ENCODE measurements at regions of chr10 and their contacts with region 1.

Region 1: DNA sequence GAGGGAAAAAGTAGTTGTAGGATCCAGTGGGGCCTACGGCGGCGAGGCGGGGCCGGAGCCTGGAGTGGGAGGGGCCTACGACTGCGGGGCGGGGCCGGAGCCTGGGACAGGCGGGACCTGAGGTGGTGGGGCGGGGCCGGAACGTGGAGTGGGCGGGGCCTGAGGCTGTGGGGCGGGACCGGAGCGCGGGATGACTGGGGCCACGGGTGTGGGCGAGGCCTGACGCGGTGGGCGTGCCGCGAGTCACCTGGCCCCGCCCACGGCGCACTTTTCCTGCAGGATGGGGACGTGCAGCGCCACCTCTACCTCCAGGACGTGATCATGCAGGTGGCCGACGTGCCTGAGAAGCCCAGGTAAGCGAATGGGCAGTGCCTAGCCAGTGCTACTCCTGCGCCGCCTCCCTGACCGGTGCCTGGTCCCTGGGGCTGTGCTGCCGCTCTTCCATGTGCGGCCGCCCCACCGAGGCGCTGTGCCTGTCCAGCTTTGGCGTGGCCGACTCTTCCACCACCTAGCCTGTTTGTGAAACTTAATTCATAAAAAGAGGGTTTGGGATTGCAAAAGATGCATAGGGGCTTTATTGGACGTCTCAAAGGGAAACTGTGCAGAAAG is 501 bp downstream of the ZNF511 start:
- DNase-seq: peak; percentile 87 to 97 (median 91)
- ATAC-seq: peak; percentile 82
- H3K4me3 ChIP-seq: peak overlapping the region; percentile 56 to 72
- H3K4me3 Mint-ChIP-seq: peak overlapping the region; percentile 99
- H3K27ac ChIP-seq: peak overlapping the region; percentile 97 to 99
- H3K27ac Mint-ChIP-seq: peak overlapping the region; percentile 90
- H3K4me1 ChIP-seq: peaks cover 18% of the 10 kb centered on the region
- H3K4me1 Mint-ChIP-seq: peaks cover 32% of the 10 kb centered on the region
- H3K27me3 ChIP-seq: no peaks in the 10 kb centered on the region
- H3K27me3 Mint-ChIP-seq: no peaks in the 10 kb centered on the region
- CTCF ChIP-seq: no peak

Region 2: GRCh38 chr10:133144771-133145170 is 164.4 kb before region 1 on chr10:
- CTCF ChIA-PET with region 1: interaction called, 12 read pairs
- POLR2A ChIA-PET with region 1: no interaction called
- intact Hi-C with region 1: loop called in 1 of 2 experiments (anchors 2 kb)
- DNase-seq: no peak
- ATAC-seq: no peak
- H3K4me3 ChIP-seq: no peak overlapping the region
- H3K4me3 Mint-ChIP-seq: no peak overlapping the region
- H3K27ac ChIP-seq: no peak overlapping the region
- H3K27ac Mint-ChIP-seq: no peak overlapping the region
- H3K4me1 ChIP-seq: no peaks in the 10 kb centered on the region
- H3K4me1 Mint-ChIP-seq: peaks cover 2% of the 10 kb centered on the region
- H3K27me3 ChIP-seq: peaks cover 0 to 2% of the 10 kb centered on the region in 2 experiments
- H3K27me3 Mint-ChIP-seq: peaks cover 56% of the 10 kb centered on the region
- CTCF ChIP-seq: no peak

Region 3: GRCh38 chr10:133294189-133294588 is 15.0 kb before region 1 on chr10:
- CTCF ChIA-PET with region 1: interaction called, 11 read pairs
- POLR2A ChIA-PET with region 1: no interaction called
- intact Hi-C with region 1: no loop called
- DNase-seq: no peak
- ATAC-seq: no peak
- H3K4me3 ChIP-seq: no peak overlapping the region
- H3K4me3 Mint-ChIP-seq: no peak overlapping the region
- H3K27ac ChIP-seq: no peak overlapping the region
- H3K27ac Mint-ChIP-seq: no peak overlapping the region
- H3K4me1 ChIP-seq: no peaks in the 10 kb centered on the region
- H3K4me1 Mint-ChIP-seq: no peaks in the 10 kb centered on the region
- H3K27me3 ChIP-seq: no peaks in the 10 kb centered on the region
- H3K27me3 Mint-ChIP-seq: no peaks in the 10 kb centered on the region
- CTCF ChIP-seq: no peak

Region 4: GRCh38 chr10:133335246-133336117 is 26.3 kb after region 1 on chr10:
- CTCF ChIA-PET with region 1: interaction called, 24 read pairs
- POLR2A ChIA-PET with region 1: interaction called, 3 read pairs
- intact Hi-C with region 1: loop called (anchors 1 kb)
- DNase-seq: peak; percentile 72 to 96 (median 87)
- ATAC-seq: peak; percentile 63
- H3K4me3 ChIP-seq: peak overlapping the region; percentile 62 to 79
- H3K4me3 Mint-ChIP-seq: peak overlapping the region; percentile 81
- H3K27ac ChIP-seq: peak overlapping the region; percentile 64 to 71
- H3K27ac Mint-ChIP-seq: peak overlapping the region; percentile 89
- H3K4me1 ChIP-seq: peaks cover 22% of the 10 kb centered on the region
- H3K4me1 Mint-ChIP-seq: peaks cover 2% of the 10 kb centered on the region
- H3K27me3 ChIP-seq: peaks cover 0 to 30% of the 10 kb centered on the region in 2 experiments
- H3K27me3 Mint-ChIP-seq: no peaks in the 10 kb centered on the region
- CTCF ChIP-seq: no peak

Region 5: GRCh38 chr10:133394064-133394663 is 84.9 kb after region 1 on chr10 and contains the start of gene MTG1:
- CTCF ChIA-PET with region 1: interaction called, 5 read pairs
- POLR2A ChIA-PET with region 1: no interaction called
- intact Hi-C with region 1: loop called (anchors 1 to 5 kb)
- DNase-seq: peak; percentile 80 to 96 (median 93)
- ATAC-seq: peak; percentile 68
- H3K4me3 ChIP-seq: peak within 1 kb of the TSS; percentile 69 to 92
- H3K4me3 Mint-ChIP-seq: peak within 1 kb of the TSS; percentile 86
- H3K27ac ChIP-seq: peak within 1 kb of the TSS; percentile 71 to 76
- H3K27ac Mint-ChIP-seq: peak within 1 kb of the TSS; percentile 89
- H3K4me1 ChIP-seq: peaks cover 40% of the 10 kb centered on the region
- H3K4me1 Mint-ChIP-seq: peaks cover 50% of the 10 kb centered on the region
- H3K27me3 ChIP-seq: no peaks in the 10 kb centered on the region
- H3K27me3 Mint-ChIP-seq: no peaks in the 10 kb centered on the region
- CTCF ChIP-seq: no peak
- total RNA-seq, gene MTG1: 30.2 to 31.0 TPM